ENCODE measurements at regions of chr1 and their contacts with region 1.

Region 1: DNA sequence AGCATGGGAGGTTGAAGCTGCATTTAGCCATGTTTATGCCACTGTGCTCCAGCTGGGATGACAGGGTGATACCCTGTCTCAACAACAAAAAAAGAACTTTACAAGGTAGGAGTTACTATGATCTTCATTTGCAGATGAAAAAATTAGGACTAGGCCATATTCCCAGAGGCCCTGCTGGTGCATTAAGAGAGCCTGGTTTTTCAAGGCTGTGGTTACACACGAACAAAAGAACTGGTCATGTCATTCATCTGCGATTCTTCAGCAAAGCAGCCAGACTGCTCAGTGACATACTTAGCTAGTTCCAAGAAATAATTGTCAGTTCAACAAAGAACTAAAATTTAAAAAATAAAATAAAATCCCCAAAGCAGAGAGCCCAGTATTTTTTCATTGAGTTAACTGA is 66.1 kb upstream of the SLC22A15 start:
- DNase-seq: no peak
- H3K4me3 Mint-ChIP-seq: no peak overlapping the region
- H3K27ac Mint-ChIP-seq: no peak overlapping the region
- H3K4me1 Mint-ChIP-seq: peaks cover 7% of the 10 kb centered on the region
- H3K27me3 Mint-ChIP-seq: no peaks in the 10 kb centered on the region
- CTCF ChIP-seq: no peak

Region 2: DNA sequence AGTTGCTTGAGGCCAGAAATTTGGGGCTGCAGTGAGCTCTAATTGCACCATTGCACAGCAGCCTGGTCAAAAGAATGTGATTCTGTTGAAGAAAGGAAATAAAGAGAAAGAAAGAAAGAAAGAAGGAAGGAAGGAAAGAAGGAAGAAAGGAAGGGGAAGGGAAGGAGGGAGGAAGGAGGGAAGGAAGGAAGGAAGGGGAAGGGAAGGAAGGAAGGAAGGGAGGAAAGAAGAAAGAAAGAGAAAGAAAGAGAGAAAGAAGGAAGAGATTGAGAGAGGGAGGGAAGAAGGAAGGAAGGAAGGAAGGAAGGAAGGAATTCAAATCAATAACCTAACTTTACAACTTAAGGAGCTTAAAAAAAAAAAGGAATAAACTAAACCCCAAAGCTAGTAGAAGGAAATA is 438.5 kb after region 1 on chr1:
- CTCF ChIA-PET with region 1: interaction called, 17 read pairs
- intact Hi-C with region 1: no loop called
- DNase-seq: no peak
- H3K4me3 Mint-ChIP-seq: no peak overlapping the region
- H3K27ac Mint-ChIP-seq: no peak overlapping the region
- H3K4me1 Mint-ChIP-seq: no peaks in the 10 kb centered on the region
- H3K27me3 Mint-ChIP-seq: no peaks in the 10 kb centered on the region
- CTCF ChIP-seq: no peak

Region 3: DNA sequence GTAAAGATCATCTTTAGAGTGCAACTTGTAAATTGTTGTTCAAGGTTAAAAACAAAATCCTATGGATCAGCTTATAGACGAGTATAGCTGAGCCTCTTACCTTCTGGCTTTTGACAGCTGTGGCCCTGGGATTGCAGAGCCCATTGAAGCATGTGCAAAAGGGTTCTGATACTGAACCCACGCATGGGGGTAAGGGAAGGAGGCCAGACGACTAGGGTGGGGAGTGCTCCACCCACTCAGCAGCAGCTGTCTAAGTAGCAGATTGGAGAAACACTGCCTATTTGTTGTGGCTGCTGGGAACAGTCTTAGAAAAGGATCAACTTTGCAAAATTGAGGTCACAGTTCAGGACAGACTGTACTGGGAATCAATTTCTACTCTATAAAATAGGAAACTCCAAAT is 1107.4 kb after region 1 on chr1:
- CTCF ChIA-PET with region 1: no interaction called
- intact Hi-C with region 1: no loop called
- DNase-seq: no peak
- H3K4me3 Mint-ChIP-seq: no peak overlapping the region
- H3K27ac Mint-ChIP-seq: no peak overlapping the region
- H3K4me1 Mint-ChIP-seq: no peaks in the 10 kb centered on the region
- H3K27me3 Mint-ChIP-seq: no peaks in the 10 kb centered on the region
- CTCF ChIP-seq: no peak

Measured in Calu3 (cell line).